Activated naive CD4-positive, alpha-beta T cell treated with anti-CD3 and anti-CD28 coated beads for 36 hours (primary cell): ENCODE measurements at regions of chr6 and their contacts with region 1.

Region 1: GRCh38 chr6:112087136-112087911 is at the starts of genes FAM229B and TUBE1:
- DNase-seq: peak; percentile 95
- H3K4me3 Mint-ChIP-seq: no peak within 1 kb of the TSS
- H3K27ac Mint-ChIP-seq: no peak within 1 kb of the TSS
- H3K4me1 Mint-ChIP-seq: peaks cover 7% of the 10 kb centered on the region
- H3K27me3 Mint-ChIP-seq: no peaks in the 10 kb centered on the region
- total RNA-seq, gene FAM229B: 9.5 to 10.2 TPM
- total RNA-seq, gene TUBE1: 53.7 to 62.7 TPM

Region 2: DNA sequence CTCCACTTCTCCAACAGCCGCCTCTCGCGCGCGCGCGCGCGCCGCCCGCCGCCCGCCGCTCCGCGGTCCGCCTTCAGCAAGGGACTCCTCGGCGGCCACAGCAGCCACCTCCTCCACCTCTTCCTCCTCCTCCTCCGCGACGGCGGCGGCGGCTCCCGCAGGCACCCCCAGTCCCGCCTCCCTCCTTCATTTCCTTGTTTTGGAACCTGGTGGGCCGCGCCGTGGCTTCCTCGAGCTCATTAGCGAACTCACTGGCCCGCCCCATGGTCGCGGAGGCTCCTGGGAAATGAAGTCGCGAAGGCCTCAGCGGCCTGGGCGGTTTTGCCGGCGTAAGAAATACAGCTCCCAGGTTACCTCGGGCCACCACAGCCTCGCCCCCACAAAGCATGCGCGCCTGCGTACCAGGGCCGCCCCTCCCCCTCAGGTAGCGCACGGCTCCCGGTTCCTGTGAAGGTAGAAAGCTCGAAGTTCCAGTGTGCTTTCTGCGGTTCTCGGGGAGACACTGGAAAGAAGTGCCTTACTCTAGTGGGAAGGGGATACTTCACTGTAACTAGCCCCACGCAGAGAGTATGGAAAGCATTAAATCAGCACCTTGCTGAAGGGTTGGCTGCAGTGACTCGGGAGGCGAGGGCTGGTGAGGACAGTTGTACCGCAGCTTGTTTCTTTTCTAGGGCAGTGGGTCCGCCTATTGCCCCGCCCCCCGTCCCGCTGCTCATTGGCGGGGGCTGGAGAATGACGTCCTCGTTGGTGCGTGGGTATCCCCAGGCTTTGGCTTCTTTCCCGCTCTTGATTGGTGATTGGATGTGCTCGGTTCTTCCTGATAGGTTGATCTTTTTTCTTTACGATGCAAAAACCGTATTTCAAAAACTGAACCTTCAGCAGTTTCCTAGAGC is 1271.9 kb before region 1 on chr6 and contains the start of gene CDK19:
- CTCF ChIA-PET with region 1: no interaction called
- intact Hi-C with region 1: loop called (anchors 1 kb)
- DNase-seq: peak; percentile 99
- H3K4me3 Mint-ChIP-seq: peak within 1 kb of the TSS; percentile 100
- H3K27ac Mint-ChIP-seq: peak within 1 kb of the TSS; percentile 95
- H3K4me1 Mint-ChIP-seq: peaks cover 19% of the 10 kb centered on the region
- H3K27me3 Mint-ChIP-seq: no peaks in the 10 kb centered on the region
- total RNA-seq, gene CDK19: 11.0 to 11.7 TPM

Region 3: DNA sequence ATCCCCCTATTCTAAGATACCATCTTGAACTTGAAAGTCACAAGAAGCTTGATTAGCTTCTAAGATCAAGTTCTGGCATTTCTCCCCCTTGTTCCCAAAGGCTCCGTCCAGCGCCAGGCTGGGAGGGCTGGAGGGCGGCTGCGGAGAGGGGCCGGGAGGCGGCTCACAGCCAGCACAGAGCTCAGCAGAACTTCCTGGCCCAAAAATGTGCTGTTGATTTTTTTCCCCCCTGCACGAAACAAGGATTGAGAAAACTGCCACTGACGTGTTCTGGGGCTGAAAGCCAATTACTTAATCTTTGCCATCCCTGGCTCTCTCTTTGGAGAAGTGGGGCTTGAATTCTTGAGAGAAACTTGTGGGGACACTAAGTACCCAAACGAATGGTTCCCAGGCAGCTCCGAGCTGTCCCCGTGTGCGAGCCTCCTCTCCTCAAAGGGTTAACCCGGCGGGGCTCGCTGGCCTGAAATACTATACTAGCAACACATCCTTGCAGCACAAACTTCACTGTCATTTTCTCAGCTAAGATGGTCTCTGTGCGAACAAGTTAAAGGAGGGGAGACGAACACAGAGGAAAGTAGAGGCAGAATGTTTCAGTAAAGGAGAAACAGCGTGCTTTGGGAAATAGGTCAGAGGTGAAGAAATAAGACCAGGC is 482.1 kb before region 1 on chr6:
- CTCF ChIA-PET with region 1: no interaction called
- intact Hi-C with region 1: loop called (anchors 1 kb)
- DNase-seq: peak; percentile 38
- H3K4me3 Mint-ChIP-seq: peak overlapping the region; percentile 82
- H3K27ac Mint-ChIP-seq: peak overlapping the region; percentile 93
- H3K4me1 Mint-ChIP-seq: peaks cover 39% of the 10 kb centered on the region
- H3K27me3 Mint-ChIP-seq: no peaks in the 10 kb centered on the region

Region 4: DNA sequence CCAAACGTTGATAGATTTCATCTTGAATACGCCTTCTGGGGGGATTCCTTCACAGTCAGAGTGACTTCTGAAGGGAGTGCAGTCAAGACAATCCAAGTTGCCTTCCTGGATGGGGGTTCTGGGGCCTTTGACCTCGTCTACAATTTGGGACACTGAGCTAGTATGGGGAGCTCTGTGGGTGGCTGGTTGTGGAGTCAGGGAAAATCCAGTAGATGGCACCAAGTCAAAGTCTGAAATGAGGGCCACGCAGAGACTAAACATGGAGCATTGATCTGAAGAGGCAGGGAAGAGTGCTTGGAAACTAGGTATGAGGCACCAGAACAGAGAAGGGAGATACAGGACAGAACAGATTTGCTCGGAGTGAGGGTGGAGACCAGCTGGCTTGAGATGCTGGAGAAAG is 77.0 kb before region 1 on chr6:
- CTCF ChIA-PET with region 1: interaction called, 4 read pairs
- intact Hi-C with region 1: loop called (anchors 1 kb)
- DNase-seq: peak; percentile 65
- H3K4me3 Mint-ChIP-seq: no peak overlapping the region
- H3K27ac Mint-ChIP-seq: no peak overlapping the region
- H3K4me1 Mint-ChIP-seq: peaks cover 40% of the 10 kb centered on the region
- H3K27me3 Mint-ChIP-seq: no peaks in the 10 kb centered on the region

Region 5: DNA sequence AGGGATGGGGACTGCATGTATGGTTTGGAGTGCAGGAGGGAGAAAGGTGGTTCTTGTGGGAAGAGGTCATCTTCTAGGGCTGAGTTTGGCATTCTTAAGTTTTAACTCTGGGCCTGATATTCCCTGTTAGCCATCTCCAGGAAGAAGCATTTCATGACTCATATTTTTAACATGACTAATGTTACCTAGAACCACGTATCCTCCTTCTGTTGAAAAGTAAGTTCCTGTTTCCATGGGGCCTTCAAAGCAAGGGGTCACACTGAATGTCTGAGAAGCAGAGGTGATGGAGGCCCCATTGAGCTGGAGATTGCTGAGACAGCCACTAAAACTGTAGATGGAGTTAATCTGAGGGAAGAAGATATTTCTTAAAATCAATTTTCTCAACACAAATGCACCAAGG is 30.2 kb after region 1 on chr6:
- CTCF ChIA-PET with region 1: interaction called, 7 read pairs
- intact Hi-C with region 1: loop called (anchors 2 kb)
- DNase-seq: peak; percentile 27
- H3K4me3 Mint-ChIP-seq: no peak overlapping the region
- H3K27ac Mint-ChIP-seq: no peak overlapping the region
- H3K4me1 Mint-ChIP-seq: peaks cover 12% of the 10 kb centered on the region
- H3K27me3 Mint-ChIP-seq: no peaks in the 10 kb centered on the region

Region 6: GRCh38 chr6:112163295-112164257 is 76.3 kb after region 1 on chr6:
- CTCF ChIA-PET with region 1: interaction called, 140 read pairs
- intact Hi-C with region 1: loop called (anchors 1 kb)
- DNase-seq: peak; percentile 91
- H3K4me3 Mint-ChIP-seq: peak overlapping the region; percentile 61
- H3K27ac Mint-ChIP-seq: peak overlapping the region; percentile 37
- H3K4me1 Mint-ChIP-seq: peaks cover 12% of the 10 kb centered on the region
- H3K27me3 Mint-ChIP-seq: peaks cover 6% of the 10 kb centered on the region

Region 7: DNA sequence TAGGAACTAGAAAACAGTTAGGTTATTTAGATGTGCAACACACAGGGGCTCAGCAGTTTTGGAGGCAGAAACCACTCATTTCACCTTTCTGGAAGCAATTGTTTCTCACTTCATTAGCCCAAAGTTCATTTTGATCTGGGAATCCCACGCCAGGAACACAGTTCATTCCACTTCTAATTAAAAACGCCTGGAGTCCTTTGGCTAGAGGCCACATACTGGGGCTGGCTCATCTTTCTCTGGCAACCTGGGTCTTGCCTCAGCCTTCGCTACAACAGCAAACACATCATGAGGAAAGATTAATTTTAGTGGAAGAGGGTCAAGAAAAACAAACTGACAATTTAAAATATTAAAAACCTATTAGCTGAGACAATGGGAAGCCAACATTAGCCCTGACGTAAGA is 329.5 kb after region 1 on chr6:
- CTCF ChIA-PET with region 1: no interaction called
- intact Hi-C with region 1: no loop called
- DNase-seq: no peak
- H3K4me3 Mint-ChIP-seq: no peak overlapping the region
- H3K27ac Mint-ChIP-seq: no peak overlapping the region
- H3K4me1 Mint-ChIP-seq: no peaks in the 10 kb centered on the region
- H3K27me3 Mint-ChIP-seq: peaks cover 5% of the 10 kb centered on the region

Region 8: DNA sequence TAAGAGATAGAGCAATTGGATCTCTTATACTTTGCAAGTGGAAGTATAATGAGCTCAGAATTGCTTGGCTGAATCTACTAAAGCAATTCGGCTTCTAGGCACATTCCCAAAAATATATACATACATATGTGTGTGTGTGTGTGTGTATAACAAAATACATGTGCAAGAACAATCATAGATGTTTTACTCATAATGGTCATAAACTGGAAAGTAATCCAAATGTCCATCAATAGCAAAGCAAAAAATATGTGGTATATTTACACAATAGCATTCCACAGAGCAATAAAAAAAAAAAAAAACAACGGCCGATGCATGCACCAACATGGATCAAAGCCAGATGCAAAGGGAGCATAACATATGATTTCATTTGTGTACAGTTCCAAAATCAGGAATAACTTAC is 967.7 kb after region 1 on chr6:
- CTCF ChIA-PET with region 1: no interaction called
- intact Hi-C with region 1: no loop called
- DNase-seq: no peak
- H3K4me3 Mint-ChIP-seq: no peak overlapping the region
- H3K27ac Mint-ChIP-seq: no peak overlapping the region
- H3K4me1 Mint-ChIP-seq: no peaks in the 10 kb centered on the region
- H3K27me3 Mint-ChIP-seq: no peaks in the 10 kb centered on the region

Region 9: DNA sequence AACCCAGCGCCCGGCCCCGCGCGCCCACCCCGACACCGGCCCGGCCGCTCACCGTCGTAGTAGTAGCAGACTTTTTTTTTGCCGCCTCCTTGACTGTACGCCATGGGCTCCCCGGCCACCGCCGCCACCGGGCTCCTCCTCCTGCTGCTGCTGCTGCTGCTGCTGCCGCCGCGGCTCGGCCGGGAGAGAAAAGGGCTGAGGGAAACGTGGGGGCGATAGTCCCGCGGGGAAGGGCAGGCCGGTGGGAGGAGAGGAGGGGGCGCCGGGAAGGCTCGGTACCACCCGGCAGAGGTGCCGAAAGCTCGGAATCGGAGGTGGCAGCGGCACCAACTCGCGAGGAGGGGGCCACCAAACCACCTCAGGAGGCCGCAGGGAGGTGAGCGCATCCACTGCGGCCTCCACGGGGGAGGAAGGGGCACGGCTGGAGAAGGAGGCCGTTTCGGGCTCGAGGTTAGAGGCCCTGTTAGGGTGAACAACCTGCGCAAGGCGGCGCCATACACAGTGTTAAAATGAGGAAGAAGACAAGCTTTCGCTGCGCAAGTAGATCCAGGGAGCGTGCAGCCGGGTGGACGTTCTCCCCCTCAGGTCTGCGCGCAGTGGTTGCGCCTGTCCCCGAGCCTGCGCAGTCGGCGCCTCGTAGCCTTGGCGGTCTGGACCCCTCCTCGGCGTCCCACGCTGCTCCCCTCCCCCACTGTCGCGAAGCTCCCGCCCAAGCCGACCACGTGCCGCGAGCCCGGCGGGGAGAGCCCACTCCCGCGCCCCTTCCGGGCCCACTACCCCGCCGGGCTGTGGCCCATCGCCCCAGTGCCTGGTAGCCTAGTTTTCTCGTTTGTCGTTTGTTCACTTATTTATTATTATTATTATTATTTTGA is 1883.7 kb after region 1 on chr6 and contains the start of gene HDAC2:
- CTCF ChIA-PET with region 1: no interaction called
- intact Hi-C with region 1: loop called (anchors 1 kb)
- DNase-seq: peak; percentile 84
- H3K4me3 Mint-ChIP-seq: peak within 1 kb of the TSS; percentile 95
- H3K27ac Mint-ChIP-seq: peak within 1 kb of the TSS; percentile 95
- H3K4me1 Mint-ChIP-seq: peaks cover 31% of the 10 kb centered on the region
- H3K27me3 Mint-ChIP-seq: no peaks in the 10 kb centered on the region
- total RNA-seq, gene HDAC2: 75.8 to 82.3 TPM